ENCODE measurements at regions of chr11 and their contacts with region 1.

Region 1: GRCh38 chr11:66694732-66695207 is 17.1 kb upstream of the RBM4B start:
- DNase-seq: peak; percentile 84 to 95 (median 87)
- ATAC-seq: peak; percentile 99
- H3K4me3 ChIP-seq: no peak overlapping the region
- H3K27ac ChIP-seq: no peak overlapping the region; the same call in 2 of the 3 replicates
- H3K4me1 ChIP-seq: peaks cover 0 to 23% of the 10 kb centered on the region in 2 experiments; a peak in 2 of 5 replicates
- H3K27me3 ChIP-seq: no peaks in the 10 kb centered on the region
- CTCF ChIP-seq: peak; percentile 98 to 99 (median 98)
- EP300 ChIP-seq: no peak
- POLR2A ChIP-seq: no peak
- RAD21 ChIP-seq: peak; percentile 98 to 99

Region 2: DNA sequence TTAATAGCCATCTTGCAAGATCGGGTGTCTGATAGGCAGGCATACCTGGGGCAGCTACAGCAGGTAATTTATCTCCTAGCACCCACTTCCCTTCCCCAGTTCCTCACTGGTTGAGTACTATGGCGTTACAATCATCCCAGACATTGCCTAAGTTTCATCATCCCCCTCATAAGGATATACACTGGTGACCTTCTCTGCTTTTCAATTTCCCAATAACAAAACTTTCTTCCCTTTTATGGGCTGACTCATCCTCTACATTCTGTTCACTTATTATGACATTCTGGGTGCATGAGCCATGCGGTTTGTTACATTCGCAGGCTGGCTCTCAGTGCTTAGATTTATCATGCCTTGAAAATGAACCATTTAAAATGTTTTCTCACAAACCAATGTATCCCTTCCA is 251.2 kb before region 1 on chr11:
- CTCF ChIA-PET with region 1: no interaction called
- POLR2A ChIA-PET with region 1: no interaction called
- in situ Hi-C with region 1: no loop called
- intact Hi-C with region 1: no loop called
- DNase-seq: no peak
- ATAC-seq: no peak
- H3K4me3 ChIP-seq: no peak overlapping the region
- H3K27ac ChIP-seq: no peak overlapping the region
- H3K4me1 ChIP-seq: peaks cover 0 to 8% of the 10 kb centered on the region in 2 experiments; a peak in 2 of 5 replicates
- H3K27me3 ChIP-seq: peaks cover 6 to 16% of the 10 kb centered on the region in 2 experiments; a peak in 3 of 5 replicates
- CTCF ChIP-seq: no peak
- EP300 ChIP-seq: no peak
- POLR2A ChIP-seq: no peak
- RAD21 ChIP-seq: no peak

Region 3: DNA sequence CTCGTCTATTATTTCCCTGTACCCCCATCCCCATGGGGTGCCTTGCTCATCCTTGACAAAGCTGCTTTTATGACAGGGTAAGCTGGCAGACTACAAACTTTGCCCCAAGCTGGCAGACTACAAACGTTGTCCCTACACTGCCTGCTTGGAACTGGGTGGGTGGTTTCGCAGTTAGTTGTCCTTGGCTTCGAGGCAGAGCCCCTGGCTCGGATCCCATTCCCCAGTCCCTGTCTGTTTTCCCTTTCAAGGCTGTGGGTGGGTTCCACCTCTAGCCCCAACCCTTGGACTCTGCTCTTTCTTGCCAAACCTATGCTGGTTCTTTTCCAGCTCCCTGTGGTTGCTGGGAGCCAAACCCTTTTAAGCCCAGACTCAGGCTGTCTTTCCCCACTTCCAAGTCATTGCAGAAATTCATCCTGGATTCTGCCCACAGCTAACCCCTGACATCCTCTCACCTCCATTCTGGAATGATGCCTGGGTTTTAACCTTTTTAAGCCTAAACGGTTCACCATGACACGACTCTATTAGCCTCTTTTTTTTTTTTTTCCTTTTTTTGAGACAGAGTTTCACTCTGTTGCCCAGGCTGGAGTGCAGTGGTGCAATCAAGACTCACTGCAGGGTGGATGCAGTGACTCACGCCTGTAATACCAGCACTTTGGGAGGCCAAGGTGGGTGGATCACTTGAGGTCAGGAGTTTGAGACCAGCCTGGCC is 87.5 kb before region 1 on chr11:
- CTCF ChIA-PET with region 1: no interaction called
- POLR2A ChIA-PET with region 1: no interaction called
- in situ Hi-C with region 1: no loop called
- intact Hi-C with region 1: no loop called
- DNase-seq: no peak
- ATAC-seq: no peak
- H3K4me3 ChIP-seq: no peak overlapping the region
- H3K27ac ChIP-seq: no peak overlapping the region
- H3K4me1 ChIP-seq: peaks cover 3 to 12% of the 10 kb centered on the region in 2 experiments; a peak in 4 of 5 replicates
- H3K27me3 ChIP-seq: no peaks in the 10 kb centered on the region
- CTCF ChIP-seq: no peak
- EP300 ChIP-seq: no peak
- POLR2A ChIP-seq: no peak
- RAD21 ChIP-seq: no peak

Region 4: GRCh38 chr11:66883016-66883968 is 188.5 kb after region 1 on chr11:
- CTCF ChIA-PET with region 1: interaction called, 18 read pairs
- POLR2A ChIA-PET with region 1: no interaction called
- in situ Hi-C with region 1: no loop called
- intact Hi-C with region 1: loop called (anchors 1 kb)
- DNase-seq: peak; percentile 64 to 78 (median 64)
- ATAC-seq: peak; percentile 86
- H3K4me3 ChIP-seq: no peak overlapping the region
- H3K27ac ChIP-seq: no peak overlapping the region
- H3K4me1 ChIP-seq: peaks cover 24 to 67% of the 10 kb centered on the region in 2 experiments; a peak in 4 of 5 replicates
- H3K27me3 ChIP-seq: no peaks in the 10 kb centered on the region
- CTCF ChIP-seq: peak; percentile 75 to 83 (median 77)
- EP300 ChIP-seq: no peak
- POLR2A ChIP-seq: no peak
- RAD21 ChIP-seq: peak; percentile 57 to 84

Region 5: DNA sequence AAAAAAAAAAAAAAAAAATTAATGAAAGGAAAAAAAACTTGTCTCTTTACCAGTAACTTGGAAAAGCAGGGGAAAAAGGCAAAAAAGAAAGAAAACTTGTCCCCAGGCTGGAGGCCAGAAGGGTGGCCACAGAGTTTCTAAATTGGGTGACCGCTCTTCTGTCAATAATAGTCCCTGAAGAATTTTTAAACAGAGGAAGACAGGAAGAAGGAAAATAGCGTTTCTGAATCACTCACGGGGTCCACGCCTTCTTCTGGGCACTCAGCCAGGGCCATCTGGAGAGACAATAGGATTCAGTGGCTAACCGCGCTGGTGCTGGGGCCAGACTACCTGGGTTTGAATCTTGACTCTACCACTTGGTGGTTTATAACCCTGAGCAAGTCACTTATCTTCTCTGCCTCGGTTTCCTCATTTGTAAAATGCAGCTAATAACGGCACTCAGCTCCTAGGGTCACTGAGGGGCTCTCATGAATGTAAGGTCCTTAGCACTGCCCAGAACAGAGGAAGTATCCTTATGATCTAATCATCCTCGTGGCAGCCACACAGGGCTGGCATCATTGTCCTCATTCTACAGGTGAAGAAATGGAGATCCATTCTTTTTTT is 287.3 kb after region 1 on chr11:
- CTCF ChIA-PET with region 1: no interaction called
- POLR2A ChIA-PET with region 1: no interaction called
- in situ Hi-C with region 1: loop called (anchors 5 kb)
- intact Hi-C with region 1: loop called (anchors 2 kb)
- DNase-seq: peak; percentile 72 to 93 (median 74)
- ATAC-seq: peak; percentile 91
- H3K4me3 ChIP-seq: no peak overlapping the region
- H3K27ac ChIP-seq: peak overlapping the region; percentile 38; the same call in 1 of the 3 replicates
- H3K4me1 ChIP-seq: peaks cover 2 to 4% of the 10 kb centered on the region in 2 experiments; a peak in 4 of 5 replicates
- H3K27me3 ChIP-seq: no peaks in the 10 kb centered on the region
- CTCF ChIP-seq: no peak
- EP300 ChIP-seq: 0 out of 2 replicates have a peak, but pooled peaks have one; percentile 8
- POLR2A ChIP-seq: no peak
- RAD21 ChIP-seq: no peak